Colonic mucosa (tissue), 4 donors: ENCODE measurements at regions of chr9 and their contacts with region 1.

Region 1: DNA sequence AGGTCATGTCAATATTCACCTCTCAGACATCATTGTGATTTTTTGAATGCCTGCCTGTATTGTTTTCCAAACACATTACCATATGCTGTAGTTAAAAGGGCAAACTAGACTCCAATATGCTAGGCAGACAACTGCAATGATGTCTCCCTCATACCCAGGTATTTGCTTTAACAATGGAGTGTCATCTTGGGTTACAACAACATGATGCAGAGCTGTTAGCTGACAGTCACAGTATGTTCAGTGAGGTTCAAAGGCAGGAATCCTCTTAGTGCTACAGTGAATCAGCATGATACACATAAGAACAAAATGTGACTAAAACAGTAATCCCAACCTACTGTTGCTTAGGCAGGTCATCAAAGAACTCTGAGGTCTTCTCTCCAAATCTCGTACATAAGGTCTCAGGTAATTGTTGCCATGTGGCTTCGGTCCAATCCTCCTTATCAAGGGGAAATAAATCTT is 24.0 kb downstream of the OR1J1 start:
- DNase-seq: no peak
- H3K4me3 ChIP-seq: no peak overlapping the region
- H3K27ac ChIP-seq: no peak overlapping the region
- H3K4me1 ChIP-seq: no peaks in the 10 kb centered on the region
- H3K27me3 ChIP-seq: no peaks in the 10 kb centered on the region
- CTCF ChIP-seq: no peak

Region 2: GRCh38 chr9:122099271-122099869 is 354.3 kb before region 1 on chr9:
- intact Hi-C with region 1: loop called (anchors 5 kb)
- DNase-seq: peak; percentile 90
- H3K4me3 ChIP-seq: no peak overlapping the region
- H3K27ac ChIP-seq: no peak overlapping the region
- H3K4me1 ChIP-seq: no peaks in the 10 kb centered on the region
- H3K27me3 ChIP-seq: no peaks in the 10 kb centered on the region
- CTCF ChIP-seq: peak; percentile 71

Region 3: DNA sequence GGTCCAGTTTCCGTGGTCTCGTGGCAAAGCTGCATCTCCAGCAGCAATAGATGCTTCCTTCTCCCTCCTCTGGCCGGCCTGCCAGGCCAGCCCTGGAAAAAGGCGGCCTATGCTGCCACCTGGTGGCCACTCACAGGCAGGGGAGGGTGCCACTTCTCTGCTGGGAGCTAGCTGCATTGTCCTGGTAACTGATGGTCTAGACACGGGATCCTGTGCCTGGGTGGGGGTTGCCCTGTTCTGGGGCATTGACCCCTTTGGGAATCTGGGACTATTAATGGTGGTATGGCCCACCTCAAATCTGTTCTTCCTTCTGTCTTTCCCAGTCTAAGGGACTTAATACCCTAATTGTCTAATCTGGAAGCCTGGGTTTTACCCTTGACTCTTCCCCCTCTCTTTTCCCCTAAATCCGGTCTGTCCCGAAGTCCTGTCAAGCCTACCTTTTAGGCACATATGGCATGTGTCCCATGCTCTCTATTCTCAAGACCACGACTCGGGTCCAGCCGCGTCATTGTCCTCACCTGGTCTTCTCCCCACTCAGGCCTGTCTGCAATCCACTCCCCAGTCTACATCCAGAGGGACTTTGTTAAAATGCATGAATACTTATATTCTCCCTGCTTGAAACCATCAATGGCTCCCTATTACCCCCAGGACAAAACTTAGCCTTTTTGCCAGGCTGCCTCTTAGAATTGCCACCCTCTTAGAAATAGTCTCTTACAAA is 102.9 kb before region 1 on chr9:
- intact Hi-C with region 1: loop called (anchors 5 kb)
- DNase-seq: peak; percentile 86
- H3K4me3 ChIP-seq: no peak overlapping the region
- H3K27ac ChIP-seq: no peak overlapping the region
- H3K4me1 ChIP-seq: peaks cover 7% of the 10 kb centered on the region
- H3K27me3 ChIP-seq: no peaks in the 10 kb centered on the region
- CTCF ChIP-seq: peak; percentile 94

Region 4: GRCh38 chr9:122383992-122384461 is 69.7 kb before region 1 on chr9:
- intact Hi-C with region 1: no loop called
- DNase-seq: no peak
- H3K4me3 ChIP-seq: no peak overlapping the region
- H3K27ac ChIP-seq: no peak overlapping the region
- H3K4me1 ChIP-seq: no peaks in the 10 kb centered on the region
- H3K27me3 ChIP-seq: no peaks in the 10 kb centered on the region
- CTCF ChIP-seq: no peak

Region 5: DNA sequence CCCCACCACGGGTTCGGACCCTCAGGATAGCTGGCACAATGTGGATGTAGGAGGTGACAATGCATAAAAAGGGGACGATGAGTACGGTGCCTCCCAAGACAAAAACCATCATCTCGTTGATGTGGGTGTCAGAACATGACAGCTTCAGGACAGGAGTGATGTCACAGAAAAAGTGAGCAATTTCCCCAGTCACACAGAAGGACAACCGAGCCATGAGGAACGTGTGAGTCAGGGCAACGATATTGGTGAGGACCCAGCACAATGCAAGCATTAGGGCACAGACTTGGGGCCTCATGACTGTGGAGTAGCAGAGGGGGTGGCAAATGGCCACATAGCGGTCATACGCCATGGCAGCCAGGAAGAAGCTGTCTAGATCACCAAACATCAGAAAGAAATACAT is 72.9 kb after region 1 on chr9:
- intact Hi-C with region 1: no loop called
- DNase-seq: no peak
- H3K4me3 ChIP-seq: no peak overlapping the region
- H3K27ac ChIP-seq: no peak overlapping the region
- H3K4me1 ChIP-seq: no peaks in the 10 kb centered on the region
- H3K27me3 ChIP-seq: no peaks in the 10 kb centered on the region
- CTCF ChIP-seq: no peak